MCF 10A (cell line): ENCODE measurements at regions of chr1 and their contacts with region 1.

Region 1: DNA sequence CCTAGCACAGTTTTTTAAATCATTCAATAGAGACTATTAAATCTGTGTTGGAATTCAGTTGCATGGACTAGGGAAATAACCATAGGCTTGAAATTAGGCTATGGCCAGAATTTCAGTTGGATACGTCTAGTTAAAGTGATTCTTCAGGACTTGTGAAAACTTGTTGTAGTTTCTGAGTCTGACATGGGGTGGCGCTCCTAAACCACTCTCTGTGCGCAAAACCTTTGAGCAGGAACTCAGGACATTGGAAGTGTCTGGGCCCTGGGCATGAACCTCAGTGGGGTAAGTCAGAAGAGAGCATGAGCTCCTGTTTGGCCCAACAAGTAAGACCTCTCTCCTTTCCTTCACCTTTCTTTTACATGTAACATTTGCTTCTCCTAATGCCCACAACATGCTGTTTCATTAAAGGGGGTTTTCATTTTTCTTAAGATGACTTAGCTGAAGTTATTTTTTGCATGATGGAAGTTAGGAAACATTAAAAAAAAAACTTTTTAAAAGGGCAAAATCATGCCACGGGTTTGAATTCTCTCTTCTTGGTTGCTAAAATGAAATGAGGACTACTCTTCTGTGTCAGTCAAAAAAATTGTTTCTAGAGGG is 17.1 kb upstream of the CCDC190 start:
- DNase-seq: peak; percentile 87
- H3K4me3 Mint-ChIP-seq: no peak overlapping the region
- H3K27ac Mint-ChIP-seq: no peak overlapping the region
- H3K4me1 Mint-ChIP-seq: no peaks in the 10 kb centered on the region
- H3K27me3 Mint-ChIP-seq: peaks cover 26% of the 10 kb centered on the region
- CTCF ChIP-seq: peak; percentile 95

Region 2: DNA sequence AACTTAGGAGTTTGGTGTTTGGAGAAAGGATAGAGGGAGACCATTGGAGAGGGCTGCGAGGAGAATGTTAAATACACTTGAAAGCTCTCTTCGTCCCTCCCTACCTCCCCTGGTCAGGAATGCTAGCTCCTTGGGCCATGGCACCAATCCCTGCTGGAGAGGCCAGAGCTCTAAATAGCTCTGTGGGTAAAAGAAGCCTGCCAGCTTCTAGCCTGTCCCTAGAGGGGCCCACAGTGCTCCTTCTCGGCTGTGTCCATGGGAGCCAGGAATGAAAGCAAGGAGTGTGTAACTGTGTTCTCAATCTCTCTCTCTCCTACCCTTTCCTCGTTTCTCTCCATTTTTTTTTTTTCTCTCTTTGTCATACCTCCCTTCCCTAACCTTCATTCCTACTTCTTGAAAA is 17.0 kb before region 1 on chr1 and contains the start of gene CCDC190:
- CTCF ChIA-PET with region 1: interaction called, 10 read pairs
- POLR2A ChIA-PET with region 1: no interaction called
- intact Hi-C with region 1: loop called (anchors 1 kb)
- DNase-seq: no peak
- H3K4me3 Mint-ChIP-seq: no peak within 1 kb of the TSS
- H3K27ac Mint-ChIP-seq: no peak within 1 kb of the TSS
- H3K4me1 Mint-ChIP-seq: peaks cover 17% of the 10 kb centered on the region
- H3K27me3 Mint-ChIP-seq: peaks cover 52% of the 10 kb centered on the region
- CTCF ChIP-seq: no peak
- total RNA-seq, gene CCDC190: not detected in 2 replicates

Region 3: DNA sequence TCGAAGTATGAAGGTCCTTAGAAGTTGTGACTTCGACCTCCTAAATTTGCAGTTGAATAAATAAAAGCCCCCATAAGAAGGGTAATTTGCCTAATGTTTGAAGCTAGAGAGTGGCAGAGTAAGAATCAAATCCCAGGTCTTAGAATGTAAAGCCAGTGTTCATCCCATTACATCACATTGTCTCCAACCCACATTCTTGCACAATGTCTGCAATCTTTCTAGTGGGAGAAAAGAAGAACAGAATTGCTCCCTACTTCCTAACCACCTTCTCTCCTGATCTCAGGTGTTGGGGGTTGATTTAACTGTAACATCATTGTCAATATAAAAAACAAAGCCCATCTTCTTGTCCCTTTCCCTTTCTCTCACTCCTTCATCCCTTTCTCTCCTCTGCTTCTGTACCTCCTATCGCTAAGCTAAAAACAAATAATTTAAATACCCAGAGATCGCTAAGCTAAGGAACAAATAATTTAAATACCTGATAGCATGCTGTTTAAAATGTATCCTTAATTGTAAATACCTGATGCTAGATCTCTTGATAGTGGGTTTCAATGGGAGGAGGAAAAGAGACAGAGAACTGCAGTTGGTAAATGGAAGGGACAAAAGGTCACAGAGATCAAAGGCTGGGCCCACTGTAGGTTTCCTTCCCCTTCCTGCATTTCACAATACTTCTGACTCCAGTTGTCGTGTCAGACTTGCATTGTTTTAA is 15.0 kb after region 1 on chr1:
- CTCF ChIA-PET with region 1: interaction called, 27 read pairs
- POLR2A ChIA-PET with region 1: interaction called, 7 read pairs
- intact Hi-C with region 1: no loop called
- DNase-seq: peak; percentile 75
- H3K4me3 Mint-ChIP-seq: no peak overlapping the region
- H3K27ac Mint-ChIP-seq: no peak overlapping the region
- H3K4me1 Mint-ChIP-seq: peaks cover 14% of the 10 kb centered on the region
- H3K27me3 Mint-ChIP-seq: no peaks in the 10 kb centered on the region
- CTCF ChIP-seq: no peak

Region 4: DNA sequence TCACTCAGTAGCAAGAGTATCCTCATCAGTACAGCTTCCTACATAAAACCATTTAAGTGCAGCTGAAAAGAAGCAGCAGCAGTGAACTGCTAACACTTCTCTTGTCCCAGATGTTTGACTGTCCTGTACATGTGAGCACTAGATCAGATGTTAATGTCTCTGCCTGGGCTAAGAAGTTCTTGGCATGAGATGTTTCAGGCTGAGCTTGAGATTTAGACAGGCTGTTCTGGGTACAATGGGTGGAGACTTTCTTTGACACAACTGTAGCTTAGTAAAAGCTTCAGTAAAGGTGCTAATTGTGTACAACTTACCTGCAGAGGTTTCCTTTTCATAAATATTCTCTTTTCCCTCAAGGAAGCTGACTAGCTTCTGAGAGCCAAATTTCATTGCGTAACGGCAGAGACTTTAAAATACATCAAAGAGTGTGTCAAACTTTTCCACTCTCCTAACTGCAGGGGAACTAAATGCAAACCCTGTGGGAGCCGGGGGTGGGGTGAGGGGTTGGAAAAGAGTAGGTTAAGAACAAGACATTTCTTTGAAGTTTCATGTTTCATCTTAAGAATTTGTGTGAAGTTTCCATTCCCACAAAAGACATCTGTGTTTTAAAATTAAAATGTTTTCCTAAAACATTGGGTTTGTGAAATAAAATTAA is 64.9 kb after region 1 on chr1:
- CTCF ChIA-PET with region 1: no interaction called
- POLR2A ChIA-PET with region 1: no interaction called
- intact Hi-C with region 1: loop called (anchors 1 kb)
- DNase-seq: peak; percentile 55
- H3K4me3 Mint-ChIP-seq: no peak overlapping the region
- H3K27ac Mint-ChIP-seq: no peak overlapping the region
- H3K4me1 Mint-ChIP-seq: peaks cover 11% of the 10 kb centered on the region
- H3K27me3 Mint-ChIP-seq: no peaks in the 10 kb centered on the region
- CTCF ChIP-seq: no peak

Region 5: DNA sequence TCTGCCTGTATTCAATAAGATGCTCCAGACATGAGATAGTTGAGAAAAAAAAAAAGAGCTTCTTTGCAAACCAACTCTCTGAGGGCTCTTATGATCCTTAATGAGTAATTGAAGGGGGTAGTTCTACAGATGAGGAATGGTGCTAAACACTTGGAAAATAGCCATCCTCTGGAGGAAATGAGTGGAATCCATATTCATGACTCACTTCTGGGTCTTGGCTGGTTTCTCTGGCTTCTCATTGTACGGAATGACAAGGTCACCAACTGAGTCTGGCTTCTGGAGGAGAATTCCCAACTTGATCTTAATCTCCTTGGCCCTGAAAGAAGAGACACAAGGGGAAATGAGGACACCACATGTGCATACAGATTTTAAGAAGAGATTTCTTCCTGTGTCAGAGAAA is 290.0 kb after region 1 on chr1:
- CTCF ChIA-PET with region 1: interaction called, 25 read pairs
- POLR2A ChIA-PET with region 1: no interaction called
- intact Hi-C with region 1: no loop called
- DNase-seq: peak; percentile 97
- H3K4me3 Mint-ChIP-seq: no peak overlapping the region
- H3K27ac Mint-ChIP-seq: no peak overlapping the region
- H3K4me1 Mint-ChIP-seq: peaks cover 23% of the 10 kb centered on the region
- H3K27me3 Mint-ChIP-seq: no peaks in the 10 kb centered on the region
- CTCF ChIP-seq: no peak

Region 6: GRCh38 chr1:163186862-163187261 is 308.8 kb after region 1 on chr1:
- CTCF ChIA-PET with region 1: interaction called, 21 read pairs
- POLR2A ChIA-PET with region 1: no interaction called
- intact Hi-C with region 1: no loop called
- DNase-seq: no peak
- H3K4me3 Mint-ChIP-seq: no peak overlapping the region
- H3K27ac Mint-ChIP-seq: no peak overlapping the region
- H3K4me1 Mint-ChIP-seq: no peaks in the 10 kb centered on the region
- H3K27me3 Mint-ChIP-seq: no peaks in the 10 kb centered on the region
- CTCF ChIP-seq: no peak

Region 7: DNA sequence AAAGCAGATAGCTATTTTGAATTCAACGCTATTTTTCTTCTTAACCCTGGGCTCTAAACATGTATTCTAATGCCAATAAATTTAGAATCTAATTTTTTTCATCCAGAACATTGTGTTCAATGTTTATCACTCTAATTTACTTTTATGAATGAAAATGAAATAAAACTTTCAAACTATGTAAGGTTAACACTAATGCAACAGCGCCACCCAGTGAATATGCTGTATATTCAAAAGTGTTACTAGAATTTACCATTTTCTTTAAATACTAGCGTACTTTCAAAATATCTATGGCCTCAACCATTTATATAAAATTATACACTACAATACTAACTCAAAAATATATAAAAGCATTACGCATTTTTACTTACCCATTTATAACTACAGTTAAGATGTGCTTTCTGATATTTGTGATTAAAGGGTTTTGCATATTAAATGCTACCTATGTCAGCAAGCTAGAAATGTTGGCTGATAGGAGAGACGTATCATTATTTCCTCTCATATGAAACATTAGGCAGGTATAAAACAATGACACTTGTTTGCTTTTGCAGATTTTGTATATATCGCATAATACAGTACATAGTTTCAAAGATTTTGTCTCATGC is 437.8 kb after region 1 on chr1:
- CTCF ChIA-PET with region 1: interaction called, 20 read pairs
- POLR2A ChIA-PET with region 1: no interaction called
- intact Hi-C with region 1: loop called (anchors 1 kb)
- DNase-seq: peak; percentile 68
- H3K4me3 Mint-ChIP-seq: no peak overlapping the region
- H3K27ac Mint-ChIP-seq: no peak overlapping the region
- H3K4me1 Mint-ChIP-seq: peaks cover 4% of the 10 kb centered on the region
- H3K27me3 Mint-ChIP-seq: no peaks in the 10 kb centered on the region
- CTCF ChIP-seq: peak; percentile 61